GM10248 (cell line): ENCODE measurements at regions of chr2 and their contacts with region 1.

Region 1: DNA sequence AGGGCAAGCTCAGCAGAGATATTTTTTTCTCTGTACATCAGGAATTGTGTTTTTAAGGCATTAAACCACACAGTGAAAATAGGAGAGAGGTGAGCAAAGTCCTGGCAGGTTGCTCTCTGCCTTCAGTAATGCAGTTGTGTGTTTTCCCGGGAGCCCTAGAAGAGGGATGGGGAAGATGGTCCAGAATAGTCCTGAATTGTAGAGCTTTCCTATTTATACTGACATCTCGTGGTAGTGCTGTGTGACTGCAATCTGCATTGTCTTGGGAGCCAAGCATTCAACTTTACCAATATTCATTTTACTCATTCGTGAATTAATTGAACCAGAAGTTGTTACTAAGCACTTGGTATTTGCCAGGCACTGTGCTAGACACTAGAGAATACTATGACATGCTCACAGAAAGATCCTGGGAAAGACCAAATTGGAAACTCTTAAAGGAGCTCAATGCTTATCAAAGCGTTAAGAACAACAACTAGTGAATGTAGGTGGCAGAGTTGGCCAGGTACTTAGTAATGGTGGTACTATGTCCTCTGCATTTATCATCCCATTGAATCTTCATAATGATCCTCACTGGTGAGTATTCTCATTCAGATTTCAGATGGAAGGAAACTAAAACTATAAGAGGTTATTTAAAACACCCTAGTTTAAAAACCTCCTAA is 214.6 kb downstream of the TRIB2 start:
- DNase-seq: peak; percentile 22
- CTCF ChIP-seq: peak; percentile 70

Region 2: GRCh38 chr2:12649602-12650400 is 281.5 kb before region 1 on chr2:
- CTCF ChIA-PET with region 1: no interaction called
- POLR2A ChIA-PET with region 1: no interaction called
- DNase-seq: no peak
- CTCF ChIP-seq: no peak

Region 3: GRCh38 chr2:12918835-12919445 is 12.4 kb before region 1 on chr2:
- CTCF ChIA-PET with region 1: interaction called, 11 read pairs
- POLR2A ChIA-PET with region 1: no interaction called
- DNase-seq: no peak
- CTCF ChIP-seq: no peak

Region 4: GRCh38 chr2:12953596-12953995 is 22.3 kb after region 1 on chr2:
- CTCF ChIA-PET with region 1: interaction called, 10 read pairs
- POLR2A ChIA-PET with region 1: no interaction called
- DNase-seq: no peak
- CTCF ChIP-seq: no peak

Region 5: DNA sequence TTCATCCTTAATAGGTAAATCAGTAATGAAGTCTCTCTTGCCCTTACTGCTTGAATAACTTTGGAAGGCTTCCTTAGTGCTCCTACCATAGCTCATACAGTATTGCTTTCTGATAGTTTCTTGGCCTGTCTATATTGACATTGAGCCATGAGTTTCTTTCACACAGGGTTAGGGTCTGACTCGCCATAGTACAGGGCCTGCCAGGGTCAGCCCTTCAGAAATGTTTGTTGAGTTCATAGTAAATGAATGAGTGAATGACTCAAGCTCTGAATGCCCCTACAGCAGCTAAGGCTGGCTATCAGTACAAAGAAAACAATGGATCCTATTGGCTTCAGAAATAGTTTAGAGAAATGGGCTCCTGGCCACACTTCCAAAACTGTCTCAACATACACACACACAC is 1636.2 kb after region 1 on chr2:
- CTCF ChIA-PET with region 1: no interaction called
- POLR2A ChIA-PET with region 1: no interaction called
- DNase-seq: no peak
- CTCF ChIP-seq: no peak